ENCODE measurements at regions of chr18 and their contacts with region 1.

Region 1: DNA sequence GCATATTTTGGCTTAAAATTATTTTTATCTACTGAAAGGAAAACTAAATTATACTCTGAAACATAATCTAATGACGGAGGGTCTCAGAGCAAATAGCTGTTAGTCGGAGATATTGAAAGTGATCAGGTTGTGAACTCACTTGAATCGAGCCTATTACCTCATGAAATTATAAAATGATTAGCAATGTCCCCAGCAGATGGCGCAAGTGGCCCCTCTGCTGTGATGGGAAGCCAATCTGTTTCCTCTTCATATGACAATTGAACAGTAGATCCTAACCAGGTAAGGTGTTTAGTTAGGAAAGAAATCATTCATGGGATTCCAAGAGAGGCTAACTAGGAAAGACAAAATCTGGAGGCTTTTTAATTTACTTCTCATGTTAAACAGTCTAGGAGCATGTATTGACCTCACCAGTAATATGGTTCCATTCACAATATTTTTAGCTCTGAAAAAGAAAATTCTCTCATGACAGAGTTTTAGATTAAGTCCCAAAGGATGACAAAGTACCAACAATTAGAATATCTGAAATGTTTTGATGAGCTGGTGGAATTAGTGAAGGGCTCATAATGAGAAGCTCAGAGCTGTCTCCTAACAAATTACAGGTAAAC is 29.9 kb upstream of the MPPE1 start:
- DNase-seq: peak; percentile 93
- H3K4me3 Mint-ChIP-seq: no peak overlapping the region
- H3K27ac Mint-ChIP-seq: no peak overlapping the region
- H3K4me1 Mint-ChIP-seq: peaks cover 2% of the 10 kb centered on the region
- H3K27me3 Mint-ChIP-seq: no peaks in the 10 kb centered on the region

Region 2: GRCh38 chr18:11995445-11996189 is 57.6 kb after region 1 on chr18:
- intact Hi-C with region 1: loop called (anchors 1 kb)
- DNase-seq: peak; percentile 87
- H3K4me3 Mint-ChIP-seq: peak overlapping the region; percentile 53
- H3K27ac Mint-ChIP-seq: peak overlapping the region; percentile 60
- H3K4me1 Mint-ChIP-seq: peaks cover 19% of the 10 kb centered on the region
- H3K27me3 Mint-ChIP-seq: no peaks in the 10 kb centered on the region

Region 3: DNA sequence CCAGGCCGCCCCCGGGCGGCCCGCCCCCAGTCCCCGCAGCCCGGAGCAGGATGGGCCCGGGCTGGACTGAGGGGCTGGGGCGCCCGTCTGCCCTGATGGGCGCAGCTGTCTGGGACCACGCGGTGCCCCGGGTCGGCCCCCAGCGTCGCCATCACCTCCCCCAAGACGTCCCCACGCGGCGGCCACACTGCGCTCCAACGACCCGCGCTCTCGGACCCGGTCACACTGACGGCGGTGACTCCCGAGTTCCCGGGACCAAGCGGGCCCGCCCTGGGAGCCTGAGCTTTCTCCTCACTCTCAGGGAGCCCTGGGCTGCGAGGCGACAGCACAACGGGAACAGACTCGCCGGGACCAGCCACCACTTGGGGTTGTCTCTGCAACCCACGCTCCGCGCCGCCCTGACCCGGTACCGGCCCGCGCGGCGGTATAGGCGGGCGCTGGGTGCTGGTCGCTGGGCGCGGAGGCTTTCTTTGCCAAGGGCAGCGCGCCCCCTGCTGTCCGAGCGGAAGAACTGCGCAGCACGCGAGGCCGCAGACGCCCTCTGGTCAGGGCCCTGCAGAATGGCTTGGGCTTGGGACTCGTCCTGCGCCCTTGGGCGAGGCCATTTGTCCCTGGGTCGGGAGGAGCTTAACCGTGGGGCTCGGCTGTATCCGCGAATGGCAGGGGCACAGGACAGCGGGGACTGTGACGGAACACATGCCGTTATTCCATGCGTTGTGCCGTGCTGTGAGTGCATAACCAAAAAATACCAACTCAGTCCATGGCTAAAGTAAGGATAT is 100.9 kb after region 1 on chr18:
- intact Hi-C with region 1: loop called (anchors 1 kb)
- DNase-seq: peak; percentile 94
- H3K4me3 Mint-ChIP-seq: peak overlapping the region; percentile 82
- H3K27ac Mint-ChIP-seq: peak overlapping the region; percentile 41
- H3K4me1 Mint-ChIP-seq: peaks cover 17% of the 10 kb centered on the region
- H3K27me3 Mint-ChIP-seq: peaks cover 9% of the 10 kb centered on the region

Region 4: DNA sequence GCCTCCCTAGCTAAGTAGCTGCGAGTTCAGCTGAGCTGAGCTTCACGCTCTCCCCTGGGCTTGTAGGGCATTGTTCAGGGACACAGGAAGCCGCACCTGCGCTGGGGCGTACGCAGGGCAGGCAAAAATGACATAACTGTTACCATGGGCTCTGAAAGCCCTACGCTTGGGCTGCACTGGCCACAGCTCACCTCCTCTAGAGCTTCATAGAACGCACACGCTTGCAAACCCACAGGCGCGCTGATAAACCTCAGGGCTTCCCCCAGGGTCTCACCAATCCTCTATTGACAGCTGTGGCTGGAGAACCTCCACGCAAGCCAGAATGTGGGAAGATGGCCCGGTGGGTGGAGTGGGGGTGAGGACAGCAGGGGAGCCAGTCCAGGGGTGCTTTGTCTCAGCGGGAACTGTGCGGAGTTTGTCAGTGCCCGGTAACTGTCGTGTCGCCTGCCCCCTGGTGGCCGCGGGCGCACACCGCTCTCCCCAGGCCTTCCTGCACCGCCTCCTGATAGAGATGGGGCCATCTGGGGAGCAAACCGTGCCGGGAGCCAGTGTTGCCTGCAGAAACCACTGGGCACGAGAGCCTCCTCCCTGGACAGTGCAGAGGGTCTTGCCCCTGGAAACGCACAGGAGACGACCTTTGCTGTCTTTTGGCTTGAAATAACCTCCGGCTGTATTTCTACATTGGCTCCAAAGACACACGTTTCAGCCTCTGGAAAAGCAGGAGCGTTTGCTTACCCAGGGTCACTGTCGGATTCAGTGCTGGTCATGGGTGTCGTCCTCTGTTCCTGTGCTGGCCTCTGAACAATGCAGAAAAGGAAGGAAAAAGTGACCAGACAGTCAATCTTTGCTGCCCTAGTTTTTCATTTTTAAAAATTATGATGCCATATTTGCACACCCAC is 299.2 kb after region 1 on chr18:
- intact Hi-C with region 1: loop called (anchors 10 kb)
- DNase-seq: peak; percentile 91
- H3K4me3 Mint-ChIP-seq: no peak overlapping the region
- H3K27ac Mint-ChIP-seq: no peak overlapping the region
- H3K4me1 Mint-ChIP-seq: peaks cover 7% of the 10 kb centered on the region
- H3K27me3 Mint-ChIP-seq: peaks cover 23% of the 10 kb centered on the region